ENCODE measurements at regions of chr11 and their contacts with region 1.

Region 1: DNA sequence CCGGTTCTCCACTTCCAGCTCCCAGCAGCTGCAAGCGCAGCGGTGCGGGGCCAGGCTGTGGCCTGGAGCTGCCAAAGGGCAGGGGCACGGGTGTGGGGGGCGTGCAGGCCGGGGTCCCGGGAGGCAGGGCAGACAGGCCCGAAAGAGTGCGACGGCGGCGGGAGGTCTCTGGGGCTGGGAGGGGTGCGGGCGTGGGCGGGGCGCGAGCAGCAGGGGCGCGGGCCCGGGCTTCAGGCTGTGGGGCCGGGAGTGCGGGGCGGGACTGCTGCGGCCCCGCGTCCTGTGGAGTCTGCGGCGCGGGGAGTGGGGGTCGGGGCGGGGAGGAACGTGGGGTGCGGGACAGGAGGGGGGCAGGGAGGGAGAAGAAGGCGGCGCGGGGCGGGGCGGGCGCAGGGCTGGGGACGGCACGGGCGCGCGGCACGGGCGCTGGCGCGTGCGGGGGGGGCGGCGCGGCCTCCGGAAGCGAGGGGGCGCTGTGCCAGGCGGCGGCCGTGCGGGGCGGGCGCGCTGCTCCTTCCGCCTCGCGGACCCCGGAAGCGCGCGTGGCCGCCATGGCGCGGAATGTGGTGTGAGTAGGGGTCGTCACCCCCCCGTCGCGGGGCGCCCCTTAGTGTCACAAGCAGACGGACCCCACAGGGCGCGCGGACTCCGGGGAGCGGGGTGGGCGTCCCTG is at the start of gene MRPL23:
- DNase-seq: peak in 1 of 2 experiments; percentile 18
- H3K4me3 ChIP-seq: no peak within 1 kb of the TSS
- H3K27ac ChIP-seq: no peak within 1 kb of the TSS
- H3K4me1 ChIP-seq: no peaks in the 10 kb centered on the region
- H3K27me3 ChIP-seq: no peaks in the 10 kb centered on the region
- CTCF ChIP-seq: no peak
- total RNA-seq, gene MRPL23: 66.4 and 76.3 TPM in 2 replicates

Region 2: DNA sequence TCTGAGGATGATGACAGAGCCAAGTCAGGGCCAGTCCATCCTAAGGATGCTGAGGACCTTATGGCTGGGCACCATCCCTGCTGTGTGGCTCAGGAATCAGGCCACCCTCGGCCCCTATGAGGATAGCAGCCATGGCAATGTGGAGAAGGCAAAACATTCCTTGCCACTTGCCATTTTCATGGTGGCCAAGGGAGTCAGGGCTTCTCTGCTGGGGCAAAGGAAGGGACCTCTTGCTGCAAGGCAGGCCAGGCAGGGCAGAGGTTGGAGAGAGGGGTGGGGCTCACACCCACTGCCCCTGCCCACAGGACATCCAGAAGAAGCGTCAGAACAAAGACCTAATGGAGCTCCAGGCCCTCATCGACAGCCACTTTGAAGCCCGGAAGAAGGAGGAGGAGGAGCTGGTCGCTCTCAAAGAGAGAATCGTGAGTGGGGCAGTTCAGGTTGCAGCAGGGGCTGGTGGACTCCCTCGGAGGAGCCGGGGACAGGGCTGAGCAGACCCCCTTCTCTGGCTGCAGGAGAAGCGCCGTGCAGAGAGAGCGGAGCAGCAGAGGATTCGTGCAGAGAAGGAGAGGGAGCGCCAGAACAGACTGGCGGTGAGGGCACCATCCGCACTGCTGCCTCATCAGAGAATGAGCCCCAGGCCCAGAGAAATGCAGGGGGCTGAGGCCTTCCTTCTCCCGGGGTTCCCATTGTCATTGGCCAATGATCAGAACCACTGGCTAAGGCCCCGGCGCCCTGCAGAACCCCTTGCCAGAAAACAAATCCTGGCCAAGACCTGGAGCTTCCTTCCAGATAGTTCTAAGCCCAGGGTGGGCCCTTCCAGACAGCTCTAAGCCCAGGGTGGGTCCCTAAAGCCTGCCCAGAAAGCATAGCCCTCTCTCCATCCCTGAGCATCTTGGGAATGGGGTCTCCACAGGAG is 13.3 kb before region 1 on chr11:
- CTCF ChIA-PET with region 1: interaction called, 14 read pairs
- POLR2A ChIA-PET with region 1: no interaction called
- intact Hi-C with region 1: no loop called
- DNase-seq: no peak
- H3K4me3 ChIP-seq: no peak overlapping the region
- H3K27ac ChIP-seq: no peak overlapping the region
- H3K4me1 ChIP-seq: no peaks in the 10 kb centered on the region
- H3K27me3 ChIP-seq: peaks cover 42% of the 10 kb centered on the region
- CTCF ChIP-seq: no peak

Region 3: GRCh38 chr11:2137202-2138071 is 190.5 kb after region 1 on chr11:
- CTCF ChIA-PET with region 1: no interaction called
- POLR2A ChIA-PET with region 1: no interaction called
- intact Hi-C with region 1: no loop called
- DNase-seq: peak in 1 of 2 experiments; percentile 12
- H3K4me3 ChIP-seq: no peak overlapping the region
- H3K27ac ChIP-seq: no peak overlapping the region
- H3K4me1 ChIP-seq: peaks cover 7% of the 10 kb centered on the region
- H3K27me3 ChIP-seq: peaks cover 14% of the 10 kb centered on the region
- CTCF ChIP-seq: no peak